H1 (cell line): ENCODE measurements at regions of chr10 and their contacts with region 1.

Region 1: DNA sequence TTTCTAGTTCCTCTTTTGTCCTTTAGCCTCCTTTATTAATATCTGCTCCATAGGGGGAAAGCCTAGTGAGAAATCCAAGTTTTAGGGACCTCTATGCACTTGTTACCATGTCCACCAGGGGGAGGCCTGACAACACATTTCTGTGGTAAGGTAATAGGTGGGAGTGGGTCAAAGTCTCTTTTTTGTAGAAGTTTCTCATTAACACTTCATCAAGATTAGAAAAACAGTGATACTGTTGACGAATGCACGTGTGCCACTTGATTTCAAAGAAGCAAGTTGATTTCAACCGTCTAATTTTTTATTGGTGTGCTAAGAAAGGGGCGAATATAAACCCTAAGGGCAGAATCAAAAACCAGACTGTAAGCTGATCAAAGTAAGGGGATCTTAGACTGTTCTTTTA is 30.6 kb downstream of the CISD1 start:
- DNase-seq: peak; percentile 9 to 79
- H3K4me3 ChIP-seq: no peak overlapping the region
- H3K27ac ChIP-seq: no peak overlapping the region
- H3K4me1 ChIP-seq: no peaks in the 10 kb centered on the region
- H3K27me3 ChIP-seq: no peaks in the 10 kb centered on the region; a peak in 1 of 7 replicates
- CTCF ChIP-seq: peak; percentile 17 to 78 (median 74)
- EP300 ChIP-seq: no peak
- POLR2A ChIP-seq: no peak
- RAD21 ChIP-seq: peak; percentile 83 to 88

Region 2: GRCh38 chr10:58177362-58177947 is 122.1 kb before region 1 on chr10:
- CTCF ChIA-PET with region 1: interaction called, 105 read pairs
- POLR2A ChIA-PET with region 1: no interaction called
- DNase-seq: no peak
- H3K4me3 ChIP-seq: no peak overlapping the region
- H3K27ac ChIP-seq: no peak overlapping the region
- H3K4me1 ChIP-seq: no peaks in the 10 kb centered on the region
- H3K27me3 ChIP-seq: no peaks in the 10 kb centered on the region
- CTCF ChIP-seq: peak in 2 of 3 experiments; percentile 16 to 38; a peak in 2 of 4 replicates
- EP300 ChIP-seq: no peak
- POLR2A ChIP-seq: no peak
- RAD21 ChIP-seq: peak; percentile 55 to 69

Region 3: DNA sequence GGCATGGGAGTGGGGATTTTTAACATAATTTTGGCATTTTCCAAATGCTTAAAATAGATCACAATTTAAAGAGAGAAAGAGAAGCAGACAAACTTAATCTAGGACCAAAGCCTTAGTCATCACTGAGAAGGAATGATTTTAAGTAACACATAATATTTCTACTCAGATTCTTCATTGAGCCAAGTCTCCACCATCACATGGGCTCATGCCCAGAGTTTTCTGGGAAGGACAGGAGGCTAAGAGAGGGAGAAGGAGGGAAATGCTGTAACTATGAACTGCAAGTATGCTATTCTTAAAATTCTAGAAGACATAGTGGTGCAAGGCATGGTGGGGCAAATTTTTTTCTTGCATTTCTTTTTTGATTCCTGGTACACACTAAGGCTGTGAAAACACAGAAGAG is 11.4 kb after region 1 on chr10:
- CTCF ChIA-PET with region 1: interaction called, 22 read pairs
- POLR2A ChIA-PET with region 1: interaction called, 3 read pairs
- DNase-seq: no peak
- H3K4me3 ChIP-seq: no peak overlapping the region
- H3K27ac ChIP-seq: no peak overlapping the region
- H3K4me1 ChIP-seq: no peaks in the 10 kb centered on the region
- H3K27me3 ChIP-seq: no peaks in the 10 kb centered on the region
- CTCF ChIP-seq: no peak
- EP300 ChIP-seq: no peak
- POLR2A ChIP-seq: no peak
- RAD21 ChIP-seq: no peak

Region 4: DNA sequence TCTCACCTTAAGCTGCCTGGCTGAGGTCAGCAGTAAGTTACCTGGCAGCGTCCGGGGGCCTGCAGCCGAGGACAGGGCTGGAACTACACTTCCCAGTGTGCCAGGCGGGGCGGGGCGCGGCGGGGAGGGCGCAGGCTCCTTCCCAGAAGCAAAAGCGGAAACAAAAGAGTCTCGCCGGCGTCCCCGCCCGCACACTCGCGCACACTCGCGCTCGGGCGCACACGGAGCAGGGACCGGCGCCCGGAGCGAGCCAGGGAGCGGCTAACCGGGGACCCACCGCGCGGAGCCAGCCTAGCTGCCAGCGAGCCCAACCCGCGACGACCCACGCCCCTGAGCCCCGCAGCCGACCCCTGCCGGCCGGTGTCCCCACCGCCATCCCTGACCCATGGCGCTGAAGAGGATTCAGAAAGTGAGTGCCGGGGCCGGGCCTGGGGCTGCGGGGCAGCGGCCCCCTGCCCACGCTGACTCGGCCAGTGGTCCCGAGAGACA is 35.3 kb after region 1 on chr10 and contains the start of gene UBE2D1:
- CTCF ChIA-PET with region 1: interaction called, 12 read pairs
- POLR2A ChIA-PET with region 1: interaction called, 5 read pairs
- DNase-seq: peak; percentile 47 to 91
- H3K4me3 ChIP-seq: peak within 1 kb of the TSS; percentile 68 to 91 (median 82)
- H3K27ac ChIP-seq: peak within 1 kb of the TSS; percentile 35; the same call in 1 of the 2 replicates
- H3K4me1 ChIP-seq: peaks cover 0 to 3% (median 0%) of the 10 kb centered on the region in 4 experiments; a peak in 2 of 7 replicates
- H3K27me3 ChIP-seq: no peaks in the 10 kb centered on the region
- CTCF ChIP-seq: peak in 1 of 3 experiments; percentile 34; a peak in 1 of 4 replicates
- EP300 ChIP-seq: no peak
- POLR2A ChIP-seq: peak; percentile 50 to 88
- RAD21 ChIP-seq: no peak
- total RNA-seq, gene UBE2D1: 30.4 and 33.5 TPM in 2 replicates

Region 5: DNA sequence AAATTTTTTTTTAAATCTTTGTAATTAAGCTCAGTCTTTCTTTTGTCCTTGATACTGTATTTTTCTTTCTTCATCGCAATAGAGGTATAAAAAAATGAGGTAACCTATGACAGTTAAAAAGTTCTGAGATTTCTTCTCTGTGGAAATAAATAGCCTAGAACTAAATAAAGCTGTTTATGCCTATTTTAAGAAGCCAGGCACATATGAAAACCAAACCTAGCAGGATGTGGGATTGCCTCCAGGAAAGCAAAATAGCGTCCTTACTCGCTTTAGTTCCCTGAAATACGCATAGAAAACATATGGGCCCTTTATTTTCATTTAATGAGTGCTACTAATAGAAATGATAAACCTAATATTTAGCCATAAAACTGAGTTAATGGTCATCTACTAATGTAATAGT is 41.8 kb after region 1 on chr10:
- CTCF ChIA-PET with region 1: interaction called, 12 read pairs
- POLR2A ChIA-PET with region 1: no interaction called
- DNase-seq: no peak
- H3K4me3 ChIP-seq: no peak overlapping the region
- H3K27ac ChIP-seq: no peak overlapping the region
- H3K4me1 ChIP-seq: no peaks in the 10 kb centered on the region; a peak in 1 of 7 replicates
- H3K27me3 ChIP-seq: no peaks in the 10 kb centered on the region
- CTCF ChIP-seq: no peak
- EP300 ChIP-seq: no peak
- POLR2A ChIP-seq: no peak
- RAD21 ChIP-seq: no peak

Region 6: GRCh38 chr10:58384999-58385783 is 85.6 kb after region 1 on chr10 and contains the start of gene TFAM:
- CTCF ChIA-PET with region 1: interaction called, 36 read pairs
- POLR2A ChIA-PET with region 1: interaction called, 8 read pairs
- DNase-seq: peak; percentile 53 to 96
- H3K4me3 ChIP-seq: peak within 1 kb of the TSS; percentile 80 to 98 (median 94)
- H3K27ac ChIP-seq: peak within 1 kb of the TSS; percentile 90
- H3K4me1 ChIP-seq: peaks cover 0 to 4% (median 1%) of the 10 kb centered on the region in 4 experiments; a peak in 3 of 7 replicates
- H3K27me3 ChIP-seq: no peaks in the 10 kb centered on the region
- CTCF ChIP-seq: peak in 2 of 3 experiments; percentile 34 to 46
- EP300 ChIP-seq: peak in 1 of 2 experiments; percentile 33; a peak in 1 of 3 replicates
- POLR2A ChIP-seq: peak; percentile 92 to 98
- RAD21 ChIP-seq: peak in 1 of 2 experiments; percentile 7; a peak in 1 of 4 replicates
- total RNA-seq, gene TFAM: 97.3 and 97.5 TPM in 2 replicates

Region 7: DNA sequence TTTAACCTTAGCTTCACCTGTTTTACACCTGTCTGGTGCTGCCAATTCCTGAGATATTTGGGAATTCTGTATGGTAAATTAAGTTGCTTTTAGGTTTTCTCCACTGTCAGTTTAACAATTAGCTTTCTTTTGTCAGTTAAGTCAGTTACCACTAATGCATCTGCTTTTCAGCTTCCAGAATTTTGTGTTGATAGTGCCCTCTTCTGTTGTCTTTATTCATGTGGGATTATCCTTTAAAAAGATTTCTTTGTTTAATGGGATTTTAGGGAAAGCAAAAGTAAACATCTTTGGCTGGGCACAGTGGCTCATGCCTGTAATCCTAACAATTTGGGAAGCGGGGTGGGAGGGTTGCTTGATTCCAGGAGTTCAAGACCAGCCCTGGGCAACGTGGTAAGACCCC is 93.7 kb after region 1 on chr10:
- CTCF ChIA-PET with region 1: interaction called, 11 read pairs
- POLR2A ChIA-PET with region 1: no interaction called
- DNase-seq: no peak
- H3K4me3 ChIP-seq: no peak overlapping the region
- H3K27ac ChIP-seq: no peak overlapping the region
- H3K4me1 ChIP-seq: no peaks in the 10 kb centered on the region
- H3K27me3 ChIP-seq: no peaks in the 10 kb centered on the region
- CTCF ChIP-seq: no peak
- EP300 ChIP-seq: no peak
- POLR2A ChIP-seq: no peak
- RAD21 ChIP-seq: no peak